CD14-positive monocyte (primary cell): ENCODE measurements at regions of chr7 and their contacts with region 1.

Region 1: DNA sequence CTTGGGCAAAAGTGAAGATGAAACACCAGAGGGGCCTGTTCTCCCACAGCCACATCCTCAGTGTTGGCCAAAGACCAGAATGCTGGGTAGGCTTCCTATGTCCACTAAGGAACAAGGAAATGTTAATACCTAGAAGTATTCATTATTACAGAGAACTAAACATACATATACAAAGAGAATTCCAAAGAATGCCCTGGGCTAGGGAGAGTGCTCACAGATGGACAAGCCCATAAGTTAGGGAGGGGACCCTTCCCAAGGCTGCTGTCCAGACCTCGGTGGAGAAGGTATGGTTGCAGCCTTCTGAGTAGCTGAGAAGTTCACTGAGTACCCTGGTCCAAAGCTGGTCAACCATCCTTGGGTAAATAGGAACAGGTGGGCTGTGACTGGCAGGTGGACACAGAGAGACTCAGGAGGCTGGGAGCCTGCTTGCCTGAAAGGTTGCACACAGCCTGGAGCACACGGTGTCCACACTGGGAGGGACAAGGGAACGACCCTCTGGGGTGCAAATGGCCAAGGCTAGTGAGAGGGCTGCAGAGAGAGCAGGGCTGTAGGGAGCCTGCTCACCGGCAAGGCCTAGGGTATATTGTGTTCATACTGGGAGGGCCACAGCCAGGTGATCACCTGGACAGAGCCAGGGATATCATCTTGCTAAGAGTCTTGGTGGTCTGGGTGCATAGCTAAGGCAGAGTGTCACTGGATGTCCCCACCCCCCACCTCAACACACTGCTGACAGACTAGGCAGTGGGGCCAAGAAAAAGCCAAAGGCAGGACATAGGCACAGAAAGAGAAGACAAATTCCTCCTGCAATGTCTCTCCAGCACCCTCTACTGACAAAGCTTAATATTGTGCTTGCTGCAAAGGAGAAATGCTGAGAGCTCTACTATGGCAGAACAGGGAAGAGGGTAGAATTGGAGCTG is 40.3 kb downstream of the CPVL start:
- DNase-seq: peak; percentile 35 to 50 (median 49)
- H3K4me3 ChIP-seq: no peak overlapping the region
- H3K4me3 Mint-ChIP-seq: no peak overlapping the region
- H3K27ac ChIP-seq: peak overlapping the region in 1 of 2 donors; percentile 52
- H3K27ac Mint-ChIP-seq: peak overlapping the region in 5 of 7 donors; percentile 23 to 75 (median 60)
- H3K4me1 ChIP-seq: peaks cover 51 to 60% of the 10 kb centered on the region in 2 donors
- H3K4me1 Mint-ChIP-seq: peaks cover 61% of the 10 kb centered on the region
- H3K27me3 ChIP-seq: no peaks in the 10 kb centered on the region
- H3K27me3 Mint-ChIP-seq: peaks cover 0 to 2% (median 0%) of the 10 kb centered on the region in 3 donors
- CTCF ChIP-seq: peak; percentile 83

Region 2: GRCh38 chr7:28674359-28674782 is 431.6 kb before region 1 on chr7:
- intact Hi-C with region 1: no loop called
- DNase-seq: no peak
- H3K4me3 ChIP-seq: no peak overlapping the region
- H3K4me3 Mint-ChIP-seq: no peak overlapping the region
- H3K27ac ChIP-seq: no peak overlapping the region
- H3K27ac Mint-ChIP-seq: no peak overlapping the region
- H3K4me1 ChIP-seq: peaks cover 32 to 40% of the 10 kb centered on the region in 2 donors
- H3K4me1 Mint-ChIP-seq: peaks cover 55% of the 10 kb centered on the region
- H3K27me3 ChIP-seq: no peaks in the 10 kb centered on the region
- H3K27me3 Mint-ChIP-seq: peaks cover 0 to 2% (median 0%) of the 10 kb centered on the region in 3 donors
- CTCF ChIP-seq: no peak

Region 3: GRCh38 chr7:28926871-28927597 is 179.0 kb before region 1 on chr7:
- intact Hi-C with region 1: loop called (anchors 5 to 10 kb)
- DNase-seq: peak; percentile 74 to 81 (median 78)
- H3K4me3 ChIP-seq: peak overlapping the region; percentile 44 to 75 (median 61)
- H3K4me3 Mint-ChIP-seq: peak overlapping the region; percentile 94
- H3K27ac ChIP-seq: peak overlapping the region in 1 of 2 donors; percentile 52
- H3K27ac Mint-ChIP-seq: peak overlapping the region in 6 of 7 donors; percentile 37 to 85 (median 60)
- H3K4me1 ChIP-seq: peaks cover 15 to 25% of the 10 kb centered on the region in 2 donors
- H3K4me1 Mint-ChIP-seq: peaks cover 34% of the 10 kb centered on the region
- H3K27me3 ChIP-seq: peaks cover 4 to 14% of the 10 kb centered on the region in 2 donors
- H3K27me3 Mint-ChIP-seq: peaks cover 13 to 16% (median 13%) of the 10 kb centered on the region in 3 donors
- CTCF ChIP-seq: peak; percentile 88

Region 4: DNA sequence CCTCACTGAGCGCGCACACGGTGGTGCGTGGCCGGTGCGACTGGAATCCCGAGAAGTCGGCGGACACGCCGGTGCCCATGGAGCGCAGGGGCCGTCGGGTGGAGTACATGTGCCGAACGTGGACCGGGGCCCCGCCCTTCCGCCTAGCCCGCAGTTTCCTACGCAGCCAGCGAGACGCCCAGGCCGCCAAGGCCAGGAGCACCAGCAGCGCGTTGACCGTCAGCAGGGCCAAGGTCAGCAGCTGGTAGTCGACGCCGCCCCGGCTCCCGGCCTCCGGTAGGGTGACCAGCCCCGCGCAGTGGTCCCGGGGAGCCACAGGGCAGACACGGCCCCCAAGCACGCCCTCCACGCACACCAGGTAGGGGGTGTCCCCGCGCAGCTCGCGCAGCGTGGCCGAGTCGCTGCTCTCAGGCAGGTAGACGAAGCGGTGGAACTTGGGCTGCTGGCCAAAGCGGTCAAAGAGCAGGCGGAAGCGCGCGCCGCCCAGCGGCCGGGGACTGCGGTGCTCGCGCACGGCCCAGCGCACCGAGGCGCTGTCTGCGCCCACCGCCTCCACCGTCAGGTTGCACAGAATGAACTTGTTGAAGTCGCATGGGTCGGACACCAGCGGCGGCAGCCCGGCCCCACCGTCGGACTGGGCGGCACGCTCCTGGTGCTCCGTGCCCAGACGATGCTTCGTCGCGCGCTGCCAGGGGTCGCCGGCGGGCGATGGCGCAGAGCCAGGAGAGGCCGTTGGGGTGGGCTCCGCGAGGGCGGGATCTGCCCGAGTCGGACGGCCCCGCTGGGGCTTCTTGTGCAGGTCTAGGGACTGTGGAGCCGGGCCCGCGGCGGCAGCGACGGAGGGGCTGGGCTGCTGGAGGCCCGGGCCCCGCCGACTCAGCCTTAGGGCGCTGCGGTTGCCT is 150.0 kb before region 1 on chr7:
- intact Hi-C with region 1: loop called in 1 of 2 experiments (anchors 10 kb)
- DNase-seq: peak; percentile 41 to 50 (median 44)
- H3K4me3 ChIP-seq: peak overlapping the region; percentile 21 to 74 (median 22)
- H3K4me3 Mint-ChIP-seq: peak overlapping the region; percentile 70 to 86
- H3K27ac ChIP-seq: no peak overlapping the region
- H3K27ac Mint-ChIP-seq: no peak overlapping the region
- H3K4me1 ChIP-seq: peaks cover 37 to 38% of the 10 kb centered on the region in 2 donors
- H3K4me1 Mint-ChIP-seq: peaks cover 29% of the 10 kb centered on the region
- H3K27me3 ChIP-seq: peaks cover 68 to 97% of the 10 kb centered on the region in 2 donors
- H3K27me3 Mint-ChIP-seq: peaks cover 66 to 96% (median 77%) of the 10 kb centered on the region in 3 donors
- CTCF ChIP-seq: peak; percentile 89

Region 5: DNA sequence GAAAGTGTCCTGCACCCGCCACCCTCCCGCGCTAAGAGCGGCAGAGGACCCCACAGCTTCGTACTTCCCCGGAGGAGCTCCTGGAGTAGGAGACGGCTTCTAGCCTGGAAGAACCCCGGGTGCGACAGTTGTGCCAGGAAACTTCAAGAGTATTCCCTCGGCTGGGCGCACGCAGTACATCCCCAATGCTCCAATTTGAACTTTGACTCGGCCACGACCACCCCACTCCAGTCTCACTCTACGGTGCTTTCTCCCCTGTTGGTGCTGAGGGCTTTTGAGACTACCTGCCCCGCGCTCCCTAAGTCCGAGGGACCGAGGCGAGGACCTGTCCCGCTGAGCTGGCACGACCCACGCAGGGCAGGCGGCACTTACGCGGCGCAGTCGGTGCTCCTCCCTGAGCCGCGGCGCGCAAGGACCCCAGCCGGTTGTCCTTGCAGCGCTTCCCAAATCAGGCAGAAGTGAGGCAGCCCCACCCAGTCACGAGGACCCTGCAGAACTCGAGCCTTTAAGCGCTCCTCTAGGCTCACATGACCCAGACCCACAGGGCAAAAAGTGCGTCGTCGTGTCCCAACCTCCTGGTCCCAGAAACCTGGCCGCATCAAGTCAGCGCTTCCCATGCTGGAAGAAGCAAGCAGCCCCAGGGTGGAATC is 40.2 kb after region 1 on chr7 and contains the start of gene CPVL:
- intact Hi-C with region 1: loop called in 1 of 2 experiments (anchors 5 kb)
- DNase-seq: peak; percentile 65 to 78 (median 67)
- H3K4me3 ChIP-seq: peak within 1 kb of the TSS; percentile 69 to 98 (median 95)
- H3K4me3 Mint-ChIP-seq: peak within 1 kb of the TSS; percentile 96 to 100
- H3K27ac ChIP-seq: peak within 1 kb of the TSS; percentile 74 to 90
- H3K27ac Mint-ChIP-seq: peak within 1 kb of the TSS; percentile 93 to 95 (median 95)
- H3K4me1 ChIP-seq: peaks cover 88 to 94% of the 10 kb centered on the region in 2 donors
- H3K4me1 Mint-ChIP-seq: peaks cover 91% of the 10 kb centered on the region
- H3K27me3 ChIP-seq: no peaks in the 10 kb centered on the region
- H3K27me3 Mint-ChIP-seq: peaks cover 0 to 2% (median 0%) of the 10 kb centered on the region in 3 donors
- CTCF ChIP-seq: no peak
- polyA plus RNA-seq, gene CPVL: 410 to 1,111 (median 1,108) TPM